IMR-90 (cell line): ENCODE measurements at regions of chr3 and their contacts with region 1.

Region 1: DNA sequence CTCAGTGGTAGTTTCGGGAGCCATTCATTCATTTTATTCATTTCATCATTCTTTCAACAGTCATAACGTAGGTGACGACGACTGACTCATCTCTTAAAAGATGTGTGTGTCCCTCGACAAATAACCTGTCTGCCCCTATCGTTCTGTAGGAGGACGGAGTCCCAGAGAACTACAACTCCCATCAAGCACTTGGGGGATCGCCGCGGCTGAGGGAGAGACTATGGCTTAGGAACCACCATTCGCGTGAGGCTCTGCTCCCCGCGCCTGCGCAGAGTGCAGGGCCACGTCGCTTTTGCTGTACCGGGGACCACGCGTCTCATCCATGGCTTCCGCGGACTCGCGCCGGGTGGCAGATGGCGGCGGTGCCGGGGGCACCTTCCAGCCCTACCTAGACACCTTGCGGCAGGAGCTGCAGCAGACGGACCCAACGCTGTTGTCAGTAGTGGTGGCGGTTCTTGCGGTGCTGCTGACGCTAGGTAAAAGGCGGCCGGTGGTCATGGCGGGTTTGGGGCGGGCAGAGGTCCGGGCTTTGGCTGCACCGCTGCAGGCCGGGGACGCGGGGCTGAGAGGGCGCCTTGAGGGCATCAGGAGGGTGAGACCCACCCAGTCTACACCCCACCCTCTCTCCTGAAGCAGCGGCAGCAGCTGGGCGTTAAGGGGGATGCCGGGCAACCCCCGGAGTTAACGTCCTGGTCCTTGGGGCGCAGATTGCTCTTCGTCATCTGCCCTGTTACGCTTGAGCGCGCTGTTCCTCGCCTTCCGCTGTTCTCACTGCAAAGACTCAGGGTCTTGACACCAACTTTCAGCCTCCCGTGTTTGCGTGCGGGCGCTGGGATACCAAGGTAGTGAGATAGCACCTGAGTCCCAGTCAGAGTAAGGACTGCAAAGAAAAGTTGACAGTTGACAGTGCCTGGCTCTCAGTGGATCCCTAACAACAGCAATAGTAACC is at the start of gene SRPRB:
- DNase-seq: peak; percentile 92
- ATAC-seq: peak; percentile 100
- H3K4me3 ChIP-seq: peak within 1 kb of the TSS; percentile 76
- H3K27ac ChIP-seq: peak within 1 kb of the TSS; percentile 60; the same call in 1 of the 2 replicates
- H3K4me1 ChIP-seq: no peaks in the 10 kb centered on the region
- H3K27me3 ChIP-seq: 0 out of 2 replicates have a peak, but pooled peaks cover 2% of the 10 kb centered on the region
- CTCF ChIP-seq: no peak
- POLR2A ChIP-seq: peak; percentile 84
- RAD21 ChIP-seq: no peak
- total RNA-seq, gene SRPRB: 98.9 and 131 TPM in 2 replicates

Region 2: DNA sequence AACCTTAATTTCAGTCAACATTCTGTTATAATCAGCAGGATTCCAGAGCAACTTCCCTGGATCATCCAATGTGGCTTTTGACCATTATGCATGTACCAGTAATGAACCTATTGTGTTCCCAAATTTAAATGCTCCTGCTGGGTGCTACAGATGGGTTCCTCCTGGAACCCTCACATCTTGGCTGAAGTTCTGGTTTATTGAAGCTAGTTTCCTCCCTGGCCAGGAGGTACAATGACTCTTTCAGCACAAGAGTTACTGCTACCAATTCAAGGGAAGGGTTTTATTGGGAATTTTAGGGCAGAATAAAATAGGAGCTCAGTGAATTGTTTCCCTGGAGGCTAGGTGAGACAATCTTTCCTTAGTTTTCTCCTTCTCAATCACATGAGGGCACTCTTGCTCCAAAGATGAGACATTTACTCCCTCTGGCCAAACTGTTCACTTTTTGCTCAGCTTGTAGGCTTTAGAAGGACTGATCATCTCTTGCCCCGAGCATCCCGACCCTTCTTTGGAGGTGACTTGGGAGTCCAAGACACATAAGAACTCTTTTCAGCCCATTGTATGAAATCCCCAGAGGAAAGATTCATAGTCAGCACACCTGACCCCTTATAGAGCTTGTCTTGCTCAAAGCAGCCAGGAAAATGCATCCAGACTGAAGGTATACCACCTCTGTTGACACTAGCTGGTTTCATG is 1074.8 kb before region 1 on chr3:
- CTCF ChIA-PET with region 1: no interaction called
- POLR2A ChIA-PET with region 1: no interaction called
- dilution Hi-C with region 1: no loop called
- in situ Hi-C with region 1: no loop called
- intact Hi-C with region 1: loop called (anchors 5 kb)
- DNase-seq: peak; percentile 57
- ATAC-seq: peak; percentile 94
- H3K4me3 ChIP-seq: no peak overlapping the region
- H3K27ac ChIP-seq: no peak overlapping the region
- H3K4me1 ChIP-seq: no peaks in the 10 kb centered on the region
- H3K27me3 ChIP-seq: peaks cover 6% of the 10 kb centered on the region
- CTCF ChIP-seq: peak; percentile 67
- POLR2A ChIP-seq: no peak
- RAD21 ChIP-seq: peak; percentile 80

Region 3: DNA sequence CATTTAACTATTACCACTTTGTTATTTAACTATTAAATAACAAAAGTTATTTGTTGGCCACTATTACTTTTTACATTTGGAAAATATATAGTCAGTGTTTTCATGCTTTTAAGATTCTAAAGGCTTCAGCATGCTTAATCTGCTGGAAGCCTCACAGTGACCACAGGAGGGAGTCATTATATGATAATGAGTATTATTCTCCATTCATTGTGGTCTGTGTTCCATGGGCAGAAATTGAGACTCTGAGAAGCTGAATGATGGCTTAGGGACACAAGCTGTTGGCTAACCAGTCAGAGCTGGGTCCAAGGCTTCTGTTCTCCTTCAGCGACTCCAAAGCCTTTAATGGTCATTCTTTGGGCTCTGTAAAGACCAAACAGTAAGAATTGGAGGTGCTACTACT is 341.2 kb before region 1 on chr3:
- CTCF ChIA-PET with region 1: no interaction called
- POLR2A ChIA-PET with region 1: no interaction called
- dilution Hi-C with region 1: no loop called
- in situ Hi-C with region 1: loop called (anchors 25 kb)
- intact Hi-C with region 1: loop called (anchors 10 kb)
- DNase-seq: peak; percentile 56
- ATAC-seq: peak; percentile 73
- H3K4me3 ChIP-seq: no peak overlapping the region
- H3K27ac ChIP-seq: no peak overlapping the region
- H3K4me1 ChIP-seq: 0 out of 2 replicates have a peak, but pooled peaks cover under 1% of the 10 kb centered on the region
- H3K27me3 ChIP-seq: 0 out of 2 replicates have a peak, but pooled peaks cover 2% of the 10 kb centered on the region
- CTCF ChIP-seq: peak; percentile 54
- POLR2A ChIP-seq: no peak
- RAD21 ChIP-seq: peak; percentile 59

Region 4: DNA sequence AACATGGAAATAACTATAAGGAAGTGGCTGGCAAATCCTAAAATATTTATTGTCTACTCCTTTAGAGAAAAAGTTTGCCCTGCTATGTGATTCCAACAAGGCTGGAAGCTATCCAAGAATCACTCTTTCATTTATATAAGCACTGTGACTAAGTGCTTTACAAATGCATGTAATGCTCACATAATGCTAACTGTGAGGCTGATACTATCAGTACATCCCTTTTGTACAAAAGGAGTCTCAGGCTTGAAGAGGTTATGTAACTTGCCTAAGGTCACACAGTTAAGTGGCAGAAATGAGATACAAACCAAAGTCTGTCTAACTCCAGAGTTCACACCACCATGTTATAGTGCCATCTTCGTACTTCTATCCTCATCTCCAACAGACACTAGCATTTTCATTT is 161.0 kb before region 1 on chr3:
- CTCF ChIA-PET with region 1: no interaction called
- POLR2A ChIA-PET with region 1: no interaction called
- dilution Hi-C with region 1: no loop called
- in situ Hi-C with region 1: no loop called
- intact Hi-C with region 1: no loop called
- DNase-seq: peak; percentile 93
- ATAC-seq: peak; percentile 96
- H3K4me3 ChIP-seq: no peak overlapping the region
- H3K27ac ChIP-seq: no peak overlapping the region
- H3K4me1 ChIP-seq: peaks cover 3% of the 10 kb centered on the region; the same call in 1 of the 2 replicates
- H3K27me3 ChIP-seq: no peaks in the 10 kb centered on the region
- CTCF ChIP-seq: no peak
- POLR2A ChIP-seq: no peak
- RAD21 ChIP-seq: no peak

Region 5: DNA sequence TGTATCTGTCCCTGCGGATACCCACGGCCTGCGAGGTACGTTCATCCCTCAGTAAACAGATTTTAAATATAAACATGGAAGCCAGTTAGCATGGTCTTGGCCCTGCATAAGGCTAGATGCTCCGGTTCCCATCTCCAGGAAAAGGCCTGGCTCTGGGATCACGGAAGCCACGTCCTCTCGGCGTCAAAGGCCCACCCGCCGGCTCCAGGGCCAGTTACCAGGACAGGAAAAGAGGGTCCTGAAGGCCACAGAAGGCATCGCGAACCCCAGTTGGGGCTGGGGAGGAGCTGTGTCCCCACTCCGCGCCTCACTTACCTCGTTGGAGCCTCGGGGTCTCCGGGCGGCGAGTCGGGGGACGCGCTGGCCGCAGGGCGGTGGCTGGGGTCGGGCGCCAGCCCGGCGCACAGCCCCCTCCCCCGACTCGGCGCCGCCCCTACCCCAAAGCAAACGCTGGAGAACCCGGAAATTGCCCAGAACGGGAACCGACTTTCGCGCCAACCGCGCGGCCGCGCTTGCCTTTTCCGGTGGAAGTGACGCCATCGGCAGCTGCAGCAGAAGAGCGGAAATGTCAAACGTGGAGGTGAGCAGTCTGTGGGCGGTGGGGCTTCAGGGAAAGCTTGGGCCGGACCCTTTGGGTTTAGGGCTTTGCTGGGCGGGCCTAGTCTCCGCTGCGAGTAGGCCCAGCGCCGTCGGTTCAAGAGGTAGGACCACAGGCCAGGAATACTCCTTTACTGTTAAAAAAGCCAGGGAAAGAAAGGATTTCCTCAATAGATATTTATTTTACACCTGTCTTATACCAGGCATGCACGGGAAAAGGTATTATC is 144.1 kb before region 1 on chr3 and contains the start of gene TOPBP1:
- CTCF ChIA-PET with region 1: no interaction called
- POLR2A ChIA-PET with region 1: interaction called, 3 read pairs
- dilution Hi-C with region 1: no loop called
- in situ Hi-C with region 1: no loop called
- intact Hi-C with region 1: loop called (anchors 1 kb)
- DNase-seq: peak; percentile 70
- ATAC-seq: peak; percentile 78
- H3K4me3 ChIP-seq: peak within 1 kb of the TSS; percentile 91
- H3K27ac ChIP-seq: peak within 1 kb of the TSS; percentile 78
- H3K4me1 ChIP-seq: no peaks in the 10 kb centered on the region; the same call in none of the 2 replicates
- H3K27me3 ChIP-seq: no peaks in the 10 kb centered on the region
- CTCF ChIP-seq: no peak
- POLR2A ChIP-seq: peak; percentile 44; the same call in 1 of the 2 replicates
- RAD21 ChIP-seq: no peak
- total RNA-seq, gene TOPBP1: 50.0 and 50.5 TPM in 2 replicates

Region 6: DNA sequence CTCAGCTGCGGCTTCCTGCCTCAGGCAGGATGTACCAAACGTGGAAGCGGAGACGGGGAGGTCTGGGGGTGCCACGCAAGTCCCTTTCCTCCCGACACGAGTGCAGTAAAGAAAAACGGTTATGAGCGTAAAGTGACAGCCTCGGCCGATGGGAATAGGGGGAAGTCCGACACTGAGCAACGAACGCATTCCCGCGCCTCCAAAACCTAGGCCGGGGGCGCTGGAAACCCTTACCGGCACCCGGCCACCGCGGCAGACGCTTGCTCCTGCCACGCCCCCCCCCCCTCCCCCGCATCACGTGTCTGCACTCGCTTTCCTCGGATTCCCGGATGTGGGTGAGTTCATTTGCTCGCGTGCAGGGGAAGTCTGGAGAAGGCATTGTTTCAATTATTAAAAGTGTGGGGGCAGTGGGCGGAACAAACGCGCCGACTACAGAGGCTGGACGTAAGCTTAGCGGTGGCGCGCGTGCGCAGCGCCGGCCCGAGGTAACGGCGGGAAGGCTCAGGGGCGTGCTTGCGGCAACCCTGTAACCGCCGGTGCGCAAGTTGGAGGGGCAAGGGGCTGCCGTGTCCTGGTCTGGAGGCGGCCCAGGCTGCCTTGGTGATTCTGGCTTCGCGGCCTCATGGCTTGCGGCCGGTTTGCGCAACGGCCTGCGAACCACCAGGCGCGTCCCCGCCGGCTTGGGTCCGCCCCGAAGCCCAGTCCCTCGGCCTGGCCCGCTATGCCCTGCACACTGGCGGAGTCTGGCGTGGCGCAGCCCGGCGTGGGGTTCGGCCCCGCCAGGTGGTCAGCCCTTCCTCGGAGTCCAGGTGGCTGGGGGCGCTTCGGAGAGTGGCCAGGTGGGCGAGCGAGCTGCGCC is 680.1 kb after region 1 on chr3 and contains the starts of genes ANAPC13 and CEP63:
- CTCF ChIA-PET with region 1: no interaction called
- POLR2A ChIA-PET with region 1: no interaction called
- dilution Hi-C with region 1: no loop called
- in situ Hi-C with region 1: loop called (anchors 25 kb)
- intact Hi-C with region 1: no loop called
- DNase-seq: peak; percentile 99
- ATAC-seq: peak; percentile 86
- H3K4me3 ChIP-seq: peak within 1 kb of the TSS; percentile 54
- H3K27ac ChIP-seq: peak within 1 kb of the TSS; percentile 93
- H3K4me1 ChIP-seq: peaks cover 20% of the 10 kb centered on the region
- H3K27me3 ChIP-seq: no peaks in the 10 kb centered on the region
- CTCF ChIP-seq: no peak
- POLR2A ChIP-seq: peak; percentile 82
- RAD21 ChIP-seq: 0 out of 2 replicates have a peak, but pooled peaks have one; percentile 5
- total RNA-seq, gene ANAPC13: 43.4 and 82.8 TPM in 2 replicates
- total RNA-seq, gene CEP63: 6.5 and 16.1 TPM in 2 replicates